ENCODE measurements at regions of chr1 and their contacts with region 1.

Region 1: GRCh38 chr1:212035123-212035834 is at the starts of genes DTL and INTS7:
- DNase-seq: peak; percentile 98
- ATAC-seq: peak; percentile 88
- H3K4me3 ChIP-seq: peak within 1 kb of the TSS; percentile 88
- H3K27ac ChIP-seq: peak within 1 kb of the TSS; percentile 71
- H3K4me1 ChIP-seq: peaks cover 18 to 41% of the 10 kb centered on the region in 2 experiments
- H3K27me3 ChIP-seq: no peaks in the 10 kb centered on the region
- CTCF ChIP-seq: peak in 2 of 3 experiments; percentile 63 to 83; a peak in 5 of 6 replicates
- POLR2A ChIP-seq: peak; percentile 86
- RAD21 ChIP-seq: peak; percentile 25; the same call in 1 of the 2 replicates
- total RNA-seq, gene DTL: 41.0 TPM
- total RNA-seq, gene INTS7: 21.7 TPM

Region 2: DNA sequence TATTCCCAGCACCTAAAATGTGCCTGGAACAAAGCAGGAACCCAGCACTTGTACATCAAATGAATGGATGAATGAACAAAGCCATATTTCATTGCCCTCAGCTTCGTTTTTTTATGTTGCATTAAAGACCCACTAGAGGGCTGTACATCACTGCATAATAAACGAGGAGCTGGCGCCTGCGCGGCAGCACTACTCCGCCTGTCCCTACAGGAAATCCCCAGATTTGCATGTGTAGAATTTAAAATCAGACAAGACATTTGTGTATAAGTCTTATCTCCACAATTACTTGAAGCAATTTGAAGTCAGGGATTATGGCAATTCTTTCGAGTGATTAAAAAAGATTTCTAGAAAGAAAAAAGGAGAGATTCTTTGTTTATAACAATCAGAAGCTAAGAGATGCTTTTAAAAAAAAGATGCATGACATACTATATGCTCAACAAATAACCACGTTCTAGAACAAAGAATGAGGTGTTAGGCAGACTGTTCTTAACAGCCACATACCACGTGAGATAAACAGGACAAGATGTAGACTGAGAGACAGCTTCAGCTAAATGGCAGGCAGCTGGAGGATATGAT is 354.4 kb before region 1 on chr1:
- CTCF ChIA-PET with region 1: interaction called, 72 read pairs
- POLR2A ChIA-PET with region 1: interaction called, 11 read pairs
- RAD21 ChIA-PET with region 1: interaction called, 5 to 12 read pairs
- intact Hi-C with region 1: loop called (anchors 1 kb)
- DNase-seq: peak; percentile 85
- ATAC-seq: peak; percentile 88
- H3K4me3 ChIP-seq: no peak overlapping the region
- H3K27ac ChIP-seq: no peak overlapping the region
- H3K4me1 ChIP-seq: peaks cover 0 to 13% of the 10 kb centered on the region in 2 experiments; a peak in 3 of 4 replicates
- H3K27me3 ChIP-seq: no peaks in the 10 kb centered on the region
- CTCF ChIP-seq: peak; percentile 64 to 94 (median 75)
- POLR2A ChIP-seq: no peak
- RAD21 ChIP-seq: peak; percentile 97

Region 3: GRCh38 chr1:211724687-211725196 is 310.5 kb before region 1 on chr1:
- CTCF ChIA-PET with region 1: no interaction called
- POLR2A ChIA-PET with region 1: no interaction called
- RAD21 ChIA-PET with region 1: no interaction called
- intact Hi-C with region 1: no loop called
- DNase-seq: no peak
- ATAC-seq: no peak
- H3K4me3 ChIP-seq: no peak overlapping the region
- H3K27ac ChIP-seq: no peak overlapping the region
- H3K4me1 ChIP-seq: no peaks in the 10 kb centered on the region
- H3K27me3 ChIP-seq: no peaks in the 10 kb centered on the region; the same call in 1 of the 2 replicates
- CTCF ChIP-seq: no peak
- POLR2A ChIP-seq: no peak
- RAD21 ChIP-seq: no peak

Region 4: GRCh38 chr1:212012034-212012740 is 23.1 kb before region 1 on chr1:
- CTCF ChIA-PET with region 1: interaction called, 30 read pairs
- POLR2A ChIA-PET with region 1: no interaction called
- RAD21 ChIA-PET with region 1: interaction called in 1 of 2 experiments, 3 read pairs
- intact Hi-C with region 1: loop called (anchors 1 kb)
- DNase-seq: peak; percentile 37
- ATAC-seq: peak; percentile 100
- H3K4me3 ChIP-seq: no peak overlapping the region
- H3K27ac ChIP-seq: no peak overlapping the region
- H3K4me1 ChIP-seq: no peaks in the 10 kb centered on the region
- H3K27me3 ChIP-seq: no peaks in the 10 kb centered on the region
- CTCF ChIP-seq: peak; percentile 85 to 99 (median 96)
- POLR2A ChIP-seq: no peak
- RAD21 ChIP-seq: peak; percentile 90

Region 5: GRCh38 chr1:212045981-212046380 is 10.7 kb after region 1 on chr1:
- CTCF ChIA-PET with region 1: interaction called, 25 read pairs
- POLR2A ChIA-PET with region 1: interaction called, 6 read pairs
- RAD21 ChIA-PET with region 1: no interaction called
- intact Hi-C with region 1: no loop called
- DNase-seq: no peak
- ATAC-seq: no peak
- H3K4me3 ChIP-seq: no peak overlapping the region
- H3K27ac ChIP-seq: no peak overlapping the region
- H3K4me1 ChIP-seq: no peaks in the 10 kb centered on the region
- H3K27me3 ChIP-seq: no peaks in the 10 kb centered on the region
- CTCF ChIP-seq: no peak
- POLR2A ChIP-seq: no peak
- RAD21 ChIP-seq: no peak

Region 6: GRCh38 chr1:212284744-212285684 is 249.7 kb after region 1 on chr1 and contains the start of gene PPP2R5A:
- CTCF ChIA-PET with region 1: interaction called, 12 read pairs
- POLR2A ChIA-PET with region 1: interaction called, 5 read pairs
- RAD21 ChIA-PET with region 1: no interaction called
- intact Hi-C with region 1: loop called (anchors 1 kb)
- DNase-seq: peak; percentile 98
- ATAC-seq: peak; percentile 91
- H3K4me3 ChIP-seq: peak within 1 kb of the TSS; percentile 83 to 86
- H3K27ac ChIP-seq: peak within 1 kb of the TSS; percentile 95
- H3K4me1 ChIP-seq: peaks cover 24 to 28% of the 10 kb centered on the region in 2 experiments; a peak in 3 of 4 replicates
- H3K27me3 ChIP-seq: no peaks in the 10 kb centered on the region
- CTCF ChIP-seq: peak in 1 of 3 experiments; percentile 23; a peak in 1 of 6 replicates
- POLR2A ChIP-seq: peak; percentile 76
- RAD21 ChIP-seq: no peak
- total RNA-seq, gene PPP2R5A: 33.1 TPM

Measured in HCT116 (cell line).